ENCODE measurements at regions of chr17 and their contacts with region 1.

Region 1: GRCh38 chr17:68106085-68106484 is 70.5 kb downstream of the KPNA2 start:
- DNase-seq: no peak
- ATAC-seq: no peak
- H3K4me3 Mint-ChIP-seq: no peak overlapping the region
- H3K27ac Mint-ChIP-seq: no peak overlapping the region
- H3K4me1 Mint-ChIP-seq: peaks cover 31% of the 10 kb centered on the region
- H3K27me3 Mint-ChIP-seq: peaks cover 7% of the 10 kb centered on the region

Region 2: DNA sequence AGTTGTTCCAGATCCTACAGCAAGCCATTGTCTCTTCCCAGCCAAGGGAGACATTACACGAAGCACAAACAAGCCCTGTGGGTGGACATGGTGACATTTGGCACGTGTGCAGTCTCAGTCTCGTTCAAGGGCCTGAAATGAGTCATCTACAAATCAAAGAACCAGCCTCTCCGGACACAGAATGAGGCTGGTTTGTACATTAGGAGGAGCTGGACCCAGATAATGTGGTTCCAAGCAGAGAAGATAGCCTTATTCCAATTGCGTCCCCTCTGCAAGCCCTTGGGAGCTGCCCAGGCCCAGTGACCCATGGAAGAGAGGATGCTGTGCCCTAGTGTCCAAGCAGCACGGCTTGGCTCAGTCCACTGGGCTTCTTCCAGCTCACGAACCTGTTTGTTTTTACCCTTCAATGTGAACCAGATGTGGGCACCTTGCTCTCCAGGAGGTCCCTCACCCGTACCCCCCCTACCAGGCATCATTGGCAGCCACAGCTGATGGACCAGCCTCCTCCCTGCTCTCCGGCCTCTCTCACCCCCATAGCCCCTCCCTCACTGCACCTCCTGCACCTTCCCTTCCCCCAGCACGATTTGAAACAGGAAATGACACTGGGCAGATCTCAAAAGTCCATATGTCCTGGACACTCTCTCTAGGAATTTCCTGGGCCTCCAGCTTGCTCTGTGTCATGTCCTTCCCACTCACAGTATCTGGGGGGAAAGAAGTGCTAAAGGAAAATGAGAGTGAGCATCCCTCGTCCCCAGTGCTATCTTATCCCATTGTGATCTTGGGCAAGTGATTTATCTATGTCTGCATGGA is 44.4 kb before region 1 on chr17:
- POLR2A ChIA-PET with region 1: interaction called, 10 read pairs
- DNase-seq: peak; percentile 8
- ATAC-seq: no peak
- H3K4me3 Mint-ChIP-seq: no peak overlapping the region
- H3K27ac Mint-ChIP-seq: no peak overlapping the region
- H3K4me1 Mint-ChIP-seq: peaks cover 17% of the 10 kb centered on the region
- H3K27me3 Mint-ChIP-seq: peaks cover 30% of the 10 kb centered on the region

Region 3: GRCh38 chr17:68124873-68125870 is 19.1 kb after region 1 on chr17:
- POLR2A ChIA-PET with region 1: no interaction called
- DNase-seq: no peak
- ATAC-seq: no peak
- H3K4me3 Mint-ChIP-seq: peak overlapping the region; percentile 0
- H3K27ac Mint-ChIP-seq: no peak overlapping the region
- H3K4me1 Mint-ChIP-seq: peaks cover 23% of the 10 kb centered on the region
- H3K27me3 Mint-ChIP-seq: no peaks in the 10 kb centered on the region

Measured in activated naive CD8-positive, alpha-beta T cell treated with anti-CD3 and anti-CD28 coated beads, Interleukin-2, amount 10 ng/mL, durations not matched to agents 7 days and 5 days (primary cell).